Heart left ventricle (tissue), 16 donors: ENCODE measurements at regions of chr2 and their contacts with region 1.

Region 1: DNA sequence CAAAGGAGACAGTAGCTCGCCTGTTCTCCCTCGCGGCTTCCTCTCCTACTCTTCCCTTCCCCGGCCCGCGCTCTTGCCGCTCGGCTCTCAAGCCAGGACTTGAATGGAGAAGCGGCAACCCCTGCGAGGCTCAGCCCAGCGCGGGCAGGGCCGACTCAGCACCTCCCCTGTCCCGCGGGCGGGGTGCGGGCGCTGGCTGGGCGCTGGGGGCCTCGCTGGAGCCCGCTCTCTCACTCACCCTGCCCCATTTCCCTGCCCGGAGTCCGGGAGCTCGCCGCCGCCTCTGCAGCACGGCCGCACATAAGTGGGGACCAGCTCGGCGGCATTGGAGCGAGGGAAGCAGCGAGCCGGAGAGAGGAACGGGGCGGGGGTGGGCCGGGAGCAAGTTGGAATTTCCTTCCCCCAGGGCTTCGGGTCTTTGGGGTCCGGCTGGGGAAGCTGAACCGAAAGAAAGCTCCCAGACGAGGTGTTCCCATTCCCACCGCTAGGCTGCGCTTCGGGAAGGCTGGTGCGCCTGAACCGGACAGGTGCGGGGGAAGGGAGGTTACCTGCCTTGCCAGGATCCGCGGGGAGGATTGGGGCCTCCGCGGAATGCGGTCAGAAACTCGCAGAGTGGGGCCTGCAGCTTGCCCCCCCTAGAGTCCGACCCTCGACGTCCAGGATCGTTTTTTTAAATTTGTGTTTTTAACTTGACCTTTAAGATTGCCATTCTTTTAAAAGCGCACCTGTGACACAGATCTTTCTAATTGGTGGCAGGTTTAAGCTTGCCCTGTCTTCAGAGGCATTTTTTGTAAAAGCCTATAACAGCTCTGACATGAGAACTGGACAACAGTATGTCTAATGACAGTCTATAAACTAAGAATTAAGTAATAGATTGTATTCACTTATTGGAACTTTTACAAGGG is at the start of gene COBLL1:
- DNase-seq: peak; percentile 77 to 89 (median 84)
- ATAC-seq: peak; percentile 65 to 86 (median 82)
- H3K4me3 ChIP-seq: peak within 1 kb of the TSS; percentile 69 to 89 (median 84)
- H3K27ac ChIP-seq: peak within 1 kb of the TSS; percentile 89 to 97 (median 96)
- H3K4me1 ChIP-seq: peaks cover 0 to 31% (median 15%) of the 10 kb centered on the region in 12 donors
- H3K27me3 ChIP-seq: peaks cover 0 to 4% (median 0%) of the 10 kb centered on the region in 9 donors
- CTCF ChIP-seq: peak; percentile 73 to 90 (median 84)
- POLR2A ChIP-seq: no peak
- total RNA-seq, gene COBLL1: 11.0 to 36.9 (median 18.8) TPM

Region 2: DNA sequence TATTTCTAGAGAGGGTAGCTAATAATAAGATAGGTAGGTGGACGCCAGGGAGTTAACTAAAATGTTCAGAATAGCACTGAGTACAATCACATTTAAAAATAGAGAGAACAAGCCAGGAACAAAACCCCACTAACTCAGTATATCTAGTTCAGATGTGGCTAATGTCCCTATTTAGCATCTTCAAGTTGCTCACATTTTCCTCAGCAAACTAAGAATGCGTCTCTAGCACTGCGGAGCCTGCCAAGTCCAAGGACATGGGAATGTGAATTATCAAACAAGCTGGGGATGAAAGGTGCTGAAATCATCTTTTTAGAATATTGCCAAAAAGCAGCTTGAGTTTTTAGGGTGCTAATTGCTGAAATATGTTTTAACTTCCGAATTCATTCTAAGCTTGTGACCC is 707.6 kb before region 1 on chr2:
- intact Hi-C with region 1: no loop called
- DNase-seq: no peak
- ATAC-seq: peak in 1 of 4 donors; percentile 24
- H3K4me3 ChIP-seq: no peak overlapping the region
- H3K27ac ChIP-seq: no peak overlapping the region
- H3K4me1 ChIP-seq: no peaks in the 10 kb centered on the region
- H3K27me3 ChIP-seq: no peaks in the 10 kb centered on the region
- CTCF ChIP-seq: no peak
- POLR2A ChIP-seq: no peak

Region 3: DNA sequence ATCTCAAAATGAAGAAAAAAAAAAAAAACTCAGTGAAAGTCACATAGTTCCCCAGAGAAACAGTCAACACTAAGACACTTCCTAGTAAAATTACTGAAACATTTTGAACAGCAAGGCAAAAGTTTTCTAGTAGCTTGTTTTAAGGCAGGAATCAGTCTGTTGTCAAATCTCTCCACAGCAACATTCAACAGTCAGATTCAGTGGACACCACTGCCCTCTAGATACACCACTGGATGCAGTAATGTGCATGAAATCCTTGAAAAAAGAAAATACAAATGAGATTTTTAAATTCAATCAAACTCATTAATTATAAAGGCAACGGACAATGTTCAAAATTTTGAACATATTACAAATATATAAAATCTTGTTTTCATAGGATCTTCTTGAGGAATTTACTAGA is 267.0 kb before region 1 on chr2:
- intact Hi-C with region 1: loop called in 1 of 10 experiments (anchors 10 kb)
- DNase-seq: no peak
- ATAC-seq: no peak
- H3K4me3 ChIP-seq: no peak overlapping the region
- H3K27ac ChIP-seq: no peak overlapping the region
- H3K4me1 ChIP-seq: peaks cover 0 to 4% (median 0%) of the 10 kb centered on the region in 12 donors
- H3K27me3 ChIP-seq: no peaks in the 10 kb centered on the region
- CTCF ChIP-seq: no peak
- POLR2A ChIP-seq: no peak

Region 4: GRCh38 chr2:164754157-164755093 is 87.5 kb before region 1 on chr2:
- intact Hi-C with region 1: loop called in 1 of 10 experiments (anchors 5 kb)
- DNase-seq: no peak
- ATAC-seq: no peak
- H3K4me3 ChIP-seq: no peak overlapping the region
- H3K27ac ChIP-seq: no peak overlapping the region
- H3K4me1 ChIP-seq: peaks cover 0 to 82% (median 18%) of the 10 kb centered on the region in 12 donors
- H3K27me3 ChIP-seq: no peaks in the 10 kb centered on the region
- CTCF ChIP-seq: no peak
- POLR2A ChIP-seq: no peak

Region 5: GRCh38 chr2:164794432-164795231 is 47.3 kb before region 1 on chr2:
- intact Hi-C with region 1: loop called in 4 of 10 experiments (anchors 5 to 10 kb)
- DNase-seq: no peak
- ATAC-seq: peak; percentile 26 to 52 (median 40)
- H3K4me3 ChIP-seq: peak overlapping the region in 2 of 12 donors; percentile 4 to 10
- H3K27ac ChIP-seq: peak overlapping the region in 11 of 12 donors; percentile 45 to 74 (median 61)
- H3K4me1 ChIP-seq: peaks cover 0 to 74% (median 40%) of the 10 kb centered on the region in 12 donors
- H3K27me3 ChIP-seq: no peaks in the 10 kb centered on the region
- CTCF ChIP-seq: no peak
- POLR2A ChIP-seq: no peak

Region 6: GRCh38 chr2:164917296-164917903 is 75.4 kb after region 1 on chr2:
- intact Hi-C with region 1: loop called in 9 of 10 experiments (anchors 2 to 5 kb)
- DNase-seq: peak; percentile 34 to 52 (median 37)
- ATAC-seq: peak in 3 of 4 donors; percentile 62 to 70 (median 66)
- H3K4me3 ChIP-seq: no peak overlapping the region
- H3K27ac ChIP-seq: no peak overlapping the region
- H3K4me1 ChIP-seq: peaks cover 0 to 20% (median 5%) of the 10 kb centered on the region in 12 donors
- H3K27me3 ChIP-seq: no peaks in the 10 kb centered on the region
- CTCF ChIP-seq: peak; percentile 39 to 78 (median 64)
- POLR2A ChIP-seq: no peak

Region 7: GRCh38 chr2:165044505-165045303 is 202.7 kb after region 1 on chr2:
- intact Hi-C with region 1: no loop called
- DNase-seq: no peak
- ATAC-seq: no peak
- H3K4me3 ChIP-seq: no peak overlapping the region
- H3K27ac ChIP-seq: no peak overlapping the region
- H3K4me1 ChIP-seq: no peaks in the 10 kb centered on the region
- H3K27me3 ChIP-seq: no peaks in the 10 kb centered on the region
- CTCF ChIP-seq: no peak
- POLR2A ChIP-seq: no peak

Region 8: DNA sequence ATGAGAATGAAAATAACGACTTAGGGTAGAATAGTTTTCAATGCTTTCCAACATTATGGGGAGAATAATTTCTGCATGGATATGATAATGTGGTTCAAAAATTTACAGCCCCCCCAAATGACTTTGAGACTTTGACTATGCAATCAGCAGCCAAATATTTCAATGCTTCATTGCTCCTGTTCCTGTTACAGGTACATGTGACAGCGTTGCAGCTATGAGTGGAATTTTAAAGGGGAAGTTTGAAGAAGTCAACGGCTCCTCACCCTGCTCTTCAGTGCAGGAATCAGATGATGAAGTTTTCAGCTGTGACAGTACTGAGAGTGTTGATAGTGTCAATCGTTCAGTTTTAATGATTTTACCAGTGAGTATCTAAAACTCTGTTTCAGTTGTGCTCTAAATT is 652.6 kb after region 1 on chr2:
- intact Hi-C with region 1: no loop called
- DNase-seq: no peak
- ATAC-seq: no peak
- H3K4me3 ChIP-seq: no peak overlapping the region
- H3K27ac ChIP-seq: no peak overlapping the region
- H3K4me1 ChIP-seq: no peaks in the 10 kb centered on the region
- H3K27me3 ChIP-seq: no peaks in the 10 kb centered on the region
- CTCF ChIP-seq: no peak
- POLR2A ChIP-seq: no peak